Upper lobe of right lung (tissue), 1 donor: ENCODE measurements at regions of chr10 and their contacts with region 1.

Region 1: GRCh38 chr10:101569838-101570766 is 18.0 kb downstream of the POLL start:
- DNase-seq: peak; percentile 90
- ATAC-seq: peak; percentile 95
- H3K4me3 ChIP-seq: peak overlapping the region; percentile 54
- H3K27ac ChIP-seq: no peak overlapping the region
- H3K4me1 ChIP-seq: peaks cover 22% of the 10 kb centered on the region
- H3K27me3 ChIP-seq: peaks cover 47% of the 10 kb centered on the region
- CTCF ChIP-seq: peak; percentile 88

Region 2: GRCh38 chr10:101214446-101215396 is 355.4 kb before region 1 on chr10:
- intact Hi-C with region 1: loop called (anchors 10 kb)
- DNase-seq: peak; percentile 80
- ATAC-seq: peak; percentile 70
- H3K4me3 ChIP-seq: no peak overlapping the region
- H3K27ac ChIP-seq: no peak overlapping the region
- H3K4me1 ChIP-seq: peaks cover 28% of the 10 kb centered on the region
- H3K27me3 ChIP-seq: peaks cover 94% of the 10 kb centered on the region
- CTCF ChIP-seq: peak; percentile 93

Region 3: DNA sequence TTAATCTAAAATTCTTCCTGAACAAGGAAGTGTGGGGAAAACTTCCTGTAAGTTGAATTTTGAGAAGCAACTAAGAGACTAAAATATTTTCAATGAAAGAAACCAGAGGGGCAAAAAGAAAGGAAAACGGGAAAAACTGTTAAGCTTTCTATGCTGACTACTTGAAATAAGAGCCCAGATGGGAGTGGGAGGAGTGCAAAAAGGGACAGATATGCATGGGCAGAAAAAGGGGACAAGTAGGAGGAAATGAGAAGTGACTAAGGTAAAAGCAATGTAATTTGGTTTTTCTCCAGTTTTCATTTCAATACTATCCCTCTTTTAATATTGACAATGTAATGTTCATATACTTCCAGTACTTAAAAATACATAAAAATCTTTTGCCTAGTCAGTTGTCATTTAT is 237.1 kb after region 1 on chr10:
- intact Hi-C with region 1: no loop called
- DNase-seq: no peak
- ATAC-seq: no peak
- H3K4me3 ChIP-seq: no peak overlapping the region
- H3K27ac ChIP-seq: no peak overlapping the region
- H3K4me1 ChIP-seq: no peaks in the 10 kb centered on the region
- H3K27me3 ChIP-seq: no peaks in the 10 kb centered on the region
- CTCF ChIP-seq: no peak